ENCODE measurements at regions of chr1 and their contacts with region 1.

Region 1: DNA sequence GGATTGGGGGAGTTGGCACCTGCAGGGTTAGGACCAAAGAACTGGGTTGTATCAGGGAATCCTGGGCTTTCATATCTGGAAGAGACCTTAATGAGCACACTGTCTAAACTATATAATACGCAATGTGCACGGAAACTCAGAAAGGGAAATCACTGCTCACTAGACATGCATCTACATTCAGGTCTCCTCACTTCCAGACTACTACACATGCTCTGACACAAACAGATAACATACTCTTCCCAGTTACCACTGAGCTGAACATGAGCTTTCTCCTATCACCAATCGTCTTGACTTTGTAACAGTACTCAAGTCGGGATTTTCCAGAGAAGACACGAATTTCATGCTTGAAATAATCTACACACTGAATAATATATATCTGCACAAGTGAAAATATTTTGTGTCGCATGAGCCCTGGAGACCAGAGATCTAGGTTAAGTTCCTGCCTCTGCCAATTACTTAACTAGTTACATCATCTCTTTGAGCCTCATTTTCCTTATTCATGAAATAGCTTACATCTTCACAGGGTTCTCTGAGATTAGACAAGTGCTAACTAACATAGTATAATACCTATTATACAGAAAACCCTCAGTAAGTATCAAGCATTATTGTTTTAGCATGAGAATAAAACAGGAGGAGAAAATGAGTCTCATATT is 101.1 kb downstream of the JAK1 start:
- DNase-seq: no peak
- ATAC-seq: no peak
- H3K4me3 ChIP-seq: no peak overlapping the region
- H3K4me3 Mint-ChIP-seq: peak overlapping the region in 1 of 3 donors; percentile 63
- H3K27ac ChIP-seq: peak overlapping the region; percentile 71
- H3K27ac Mint-ChIP-seq: peak overlapping the region; percentile 85 to 88
- H3K4me1 ChIP-seq: peaks cover 8 to 33% of the 10 kb centered on the region in 2 experiments
- H3K4me1 Mint-ChIP-seq: peaks cover 38 to 53% (median 53%) of the 10 kb centered on the region in 3 donors
- H3K27me3 ChIP-seq: no peaks in the 10 kb centered on the region
- H3K27me3 Mint-ChIP-seq: no peaks in the 10 kb centered on the region

Region 2: DNA sequence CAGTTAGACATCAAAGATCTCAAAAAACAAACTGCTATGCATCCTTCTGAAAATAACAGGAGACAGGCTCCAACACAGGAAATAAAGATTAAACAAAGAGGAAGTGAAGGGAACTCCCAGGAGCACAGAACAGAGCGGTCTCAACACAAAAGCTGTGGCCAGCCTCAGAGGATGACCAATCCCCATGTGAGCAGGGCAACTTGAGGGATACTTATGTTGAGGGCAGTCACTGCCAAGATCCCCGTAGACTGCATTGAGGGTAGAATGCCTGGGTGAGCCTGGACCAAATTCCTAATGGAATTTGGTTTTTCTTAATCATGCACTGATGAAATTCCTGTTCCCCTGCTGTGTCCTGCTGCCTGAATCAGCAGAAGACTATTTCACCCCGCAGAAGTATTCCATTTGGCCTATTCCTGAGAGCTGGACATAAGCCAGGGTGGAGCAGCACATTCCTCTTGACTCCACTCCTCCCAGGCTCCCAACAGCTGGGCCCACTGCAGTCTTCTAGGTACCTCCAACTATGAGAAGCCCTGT is 52.2 kb after region 1 on chr1:
- CTCF ChIA-PET with region 1: no interaction called
- POLR2A ChIA-PET with region 1: no interaction called
- DNase-seq: peak in 1 of 35 experiments; percentile 20
- ATAC-seq: no peak
- H3K4me3 ChIP-seq: no peak overlapping the region
- H3K4me3 Mint-ChIP-seq: peak overlapping the region; percentile 8 to 55 (median 11)
- H3K27ac ChIP-seq: no peak overlapping the region
- H3K27ac Mint-ChIP-seq: peak overlapping the region; percentile 4 to 43
- H3K4me1 ChIP-seq: peaks cover 31 to 57% of the 10 kb centered on the region in 2 experiments
- H3K4me1 Mint-ChIP-seq: peaks cover 96 to 98% (median 96%) of the 10 kb centered on the region in 3 donors
- H3K27me3 ChIP-seq: no peaks in the 10 kb centered on the region
- H3K27me3 Mint-ChIP-seq: no peaks in the 10 kb centered on the region

Region 3: GRCh38 chr1:64973061-64973647 is 107.9 kb after region 1 on chr1:
- CTCF ChIA-PET with region 1: interaction called in 1 of 2 experiments, 3 read pairs
- POLR2A ChIA-PET with region 1: interaction called in 1 of 2 experiments, 15 read pairs
- DNase-seq: no peak
- ATAC-seq: no peak
- H3K4me3 ChIP-seq: no peak overlapping the region
- H3K4me3 Mint-ChIP-seq: no peak overlapping the region
- H3K27ac ChIP-seq: no peak overlapping the region
- H3K27ac Mint-ChIP-seq: no peak overlapping the region
- H3K4me1 ChIP-seq: peaks cover 3% of the 10 kb centered on the region in 2 experiments
- H3K4me1 Mint-ChIP-seq: peaks cover 1 to 8% (median 5%) of the 10 kb centered on the region in 3 donors
- H3K27me3 ChIP-seq: no peaks in the 10 kb centered on the region
- H3K27me3 Mint-ChIP-seq: no peaks in the 10 kb centered on the region